ENCODE measurements at regions of chr5 and their contacts with region 1.

Region 1: GRCh38 chr5:52915176-52915875 is 73.8 kb upstream of the ITGA2 start:
- DNase-seq: no peak
- H3K4me3 ChIP-seq: peak overlapping the region in 1 of 8 donors; percentile 44
- H3K27ac ChIP-seq: peak overlapping the region in 7 of 8 donors; percentile 1 to 63 (median 42)
- H3K4me1 ChIP-seq: peaks cover 5 to 30% (median 13%) of the 10 kb centered on the region in 6 donors
- H3K27me3 ChIP-seq: no peaks in the 10 kb centered on the region
- CTCF ChIP-seq: peak; percentile 30 to 80 (median 69)
- POLR2A ChIP-seq: no peak

Region 2: GRCh38 chr5:52665559-52665958 is 249.8 kb before region 1 on chr5:
- intact Hi-C with region 1: loop called (anchors 10 kb)
- DNase-seq: no peak
- H3K4me3 ChIP-seq: no peak overlapping the region
- H3K27ac ChIP-seq: peak overlapping the region in 7 of 8 donors; percentile 45 to 77 (median 61)
- H3K4me1 ChIP-seq: peaks cover 0 to 15% (median 7%) of the 10 kb centered on the region in 6 donors
- H3K27me3 ChIP-seq: no peaks in the 10 kb centered on the region
- CTCF ChIP-seq: no peak
- POLR2A ChIP-seq: no peak